A673 (cell line): ENCODE measurements at regions of chr18 and their contacts with region 1.

Region 1: GRCh38 chr18:68925268-68925667 is 127.4 kb downstream of the CCDC102B start:
- DNase-seq: peak; percentile 56
- H3K4me3 ChIP-seq: no peak overlapping the region
- H3K27ac ChIP-seq: no peak overlapping the region
- H3K4me1 ChIP-seq: peaks cover 5% of the 10 kb centered on the region
- H3K27me3 ChIP-seq: no peaks in the 10 kb centered on the region
- CTCF ChIP-seq: peak; percentile 64

Region 2: GRCh38 chr18:68438983-68439382 is 486.3 kb before region 1 on chr18:
- CTCF ChIA-PET with region 1: no interaction called
- POLR2A ChIA-PET with region 1: no interaction called
- intact Hi-C with region 1: no loop called
- DNase-seq: peak; percentile 92
- H3K4me3 ChIP-seq: no peak overlapping the region
- H3K27ac ChIP-seq: peak overlapping the region; percentile 88
- H3K4me1 ChIP-seq: peaks cover 44% of the 10 kb centered on the region
- H3K27me3 ChIP-seq: no peaks in the 10 kb centered on the region
- CTCF ChIP-seq: no peak

Region 3: DNA sequence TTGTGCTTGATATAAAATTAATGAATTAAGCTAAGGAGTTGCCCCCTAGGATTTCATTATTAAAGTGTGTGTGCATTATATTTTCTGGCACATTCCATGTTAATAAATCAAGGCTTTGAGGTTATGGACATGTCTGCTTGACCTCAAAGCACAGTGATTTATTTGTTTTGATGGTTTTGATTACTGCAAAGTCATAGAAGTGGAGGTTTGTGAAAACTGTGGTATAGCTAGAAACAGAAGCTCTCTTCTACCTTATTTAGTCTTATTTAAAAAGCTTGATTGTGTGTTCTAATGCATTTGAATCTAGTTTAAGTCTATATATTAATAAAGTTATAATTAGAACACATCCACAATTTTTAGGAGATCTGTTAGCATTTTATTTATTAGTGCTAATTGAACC is 507.6 kb after region 1 on chr18:
- CTCF ChIA-PET with region 1: no interaction called
- POLR2A ChIA-PET with region 1: no interaction called
- intact Hi-C with region 1: loop called (anchors 5 kb)
- DNase-seq: peak; percentile 8
- H3K4me3 ChIP-seq: no peak overlapping the region
- H3K27ac ChIP-seq: peak overlapping the region; percentile 15
- H3K4me1 ChIP-seq: peaks cover 31% of the 10 kb centered on the region
- H3K27me3 ChIP-seq: no peaks in the 10 kb centered on the region
- CTCF ChIP-seq: no peak

Region 4: GRCh38 chr18:69484699-69485396 is 559.6 kb after region 1 on chr18:
- CTCF ChIA-PET with region 1: no interaction called
- POLR2A ChIA-PET with region 1: no interaction called
- intact Hi-C with region 1: loop called (anchors 10 kb)
- DNase-seq: peak; percentile 79
- H3K4me3 ChIP-seq: no peak overlapping the region
- H3K27ac ChIP-seq: peak overlapping the region; percentile 14
- H3K4me1 ChIP-seq: peaks cover 11% of the 10 kb centered on the region
- H3K27me3 ChIP-seq: no peaks in the 10 kb centered on the region
- CTCF ChIP-seq: peak; percentile 75

Region 5: GRCh38 chr18:70082430-70082829 is 1157.2 kb after region 1 on chr18:
- CTCF ChIA-PET with region 1: no interaction called
- POLR2A ChIA-PET with region 1: no interaction called
- intact Hi-C with region 1: loop called (anchors 5 kb)
- DNase-seq: no peak
- H3K4me3 ChIP-seq: no peak overlapping the region
- H3K27ac ChIP-seq: no peak overlapping the region
- H3K4me1 ChIP-seq: no peaks in the 10 kb centered on the region
- H3K27me3 ChIP-seq: no peaks in the 10 kb centered on the region
- CTCF ChIP-seq: no peak